ENCODE measurements at regions of chr4 and their contacts with region 1.

Region 1: DNA sequence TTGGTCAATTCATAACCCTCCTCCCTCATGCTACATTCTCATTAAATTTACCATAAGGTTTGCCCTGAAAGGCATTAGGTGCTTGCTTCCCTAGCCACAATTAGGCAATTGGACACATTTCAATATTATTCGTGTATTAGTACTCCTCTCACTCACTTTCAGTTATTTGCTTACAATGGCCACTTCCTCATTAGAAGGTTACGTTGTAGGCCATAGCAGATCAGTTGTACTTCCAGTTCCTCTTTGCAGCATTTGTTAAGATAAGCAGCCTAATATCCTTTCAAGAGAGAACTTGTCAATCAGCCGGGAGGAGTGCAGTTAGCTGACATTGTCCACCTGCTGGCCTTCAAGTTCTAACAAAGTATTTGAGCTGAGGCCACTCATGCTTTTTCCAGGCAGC is 1017.2 kb downstream of the PCDH7 start:
- DNase-seq: no peak
- H3K4me3 ChIP-seq: no peak overlapping the region
- H3K27ac ChIP-seq: no peak overlapping the region
- H3K4me1 ChIP-seq: no peaks in the 10 kb centered on the region
- H3K27me3 ChIP-seq: no peaks in the 10 kb centered on the region
- CTCF ChIP-seq: no peak
- POLR2A ChIP-seq: no peak

Region 2: GRCh38 chr4:31715302-31715701 is 22.1 kb before region 1 on chr4:
- CTCF ChIA-PET with region 1: no interaction called
- POLR2A ChIA-PET with region 1: no interaction called
- dilution Hi-C with region 1: no loop called
- intact Hi-C with region 1: no loop called
- DNase-seq: no peak
- H3K4me3 ChIP-seq: no peak overlapping the region
- H3K27ac ChIP-seq: no peak overlapping the region
- H3K4me1 ChIP-seq: no peaks in the 10 kb centered on the region
- H3K27me3 ChIP-seq: no peaks in the 10 kb centered on the region
- CTCF ChIP-seq: no peak
- POLR2A ChIP-seq: no peak

Region 3: DNA sequence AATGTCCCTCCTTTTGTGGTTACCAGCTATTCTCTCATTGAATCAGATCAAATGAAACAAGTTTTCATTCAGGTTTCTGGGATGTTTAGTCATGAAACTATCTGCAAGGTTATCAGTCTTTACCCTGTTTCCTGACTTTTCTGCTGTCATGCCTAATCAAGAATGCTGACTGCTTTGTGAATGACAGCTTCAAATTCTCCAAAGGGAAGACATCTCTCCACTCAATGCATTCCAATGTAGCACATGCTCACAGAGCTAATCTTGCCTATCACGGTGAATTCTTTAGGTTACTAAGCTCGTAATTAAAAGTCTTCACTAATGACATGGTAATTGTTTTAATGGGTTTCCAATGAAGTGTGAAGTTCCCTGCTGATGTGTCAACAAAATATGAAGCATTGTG is 51.3 kb after region 1 on chr4:
- CTCF ChIA-PET with region 1: no interaction called
- POLR2A ChIA-PET with region 1: no interaction called
- dilution Hi-C with region 1: no loop called
- intact Hi-C with region 1: loop called (anchors 1 kb)
- DNase-seq: no peak
- H3K4me3 ChIP-seq: no peak overlapping the region
- H3K27ac ChIP-seq: no peak overlapping the region
- H3K4me1 ChIP-seq: no peaks in the 10 kb centered on the region
- H3K27me3 ChIP-seq: no peaks in the 10 kb centered on the region
- CTCF ChIP-seq: no peak
- POLR2A ChIP-seq: no peak

Measured in endothelial cell of umbilical vein (primary cell).